HEK293 (cell line): ENCODE measurements at regions of chr15 and their contacts with region 1.

Region 1: DNA sequence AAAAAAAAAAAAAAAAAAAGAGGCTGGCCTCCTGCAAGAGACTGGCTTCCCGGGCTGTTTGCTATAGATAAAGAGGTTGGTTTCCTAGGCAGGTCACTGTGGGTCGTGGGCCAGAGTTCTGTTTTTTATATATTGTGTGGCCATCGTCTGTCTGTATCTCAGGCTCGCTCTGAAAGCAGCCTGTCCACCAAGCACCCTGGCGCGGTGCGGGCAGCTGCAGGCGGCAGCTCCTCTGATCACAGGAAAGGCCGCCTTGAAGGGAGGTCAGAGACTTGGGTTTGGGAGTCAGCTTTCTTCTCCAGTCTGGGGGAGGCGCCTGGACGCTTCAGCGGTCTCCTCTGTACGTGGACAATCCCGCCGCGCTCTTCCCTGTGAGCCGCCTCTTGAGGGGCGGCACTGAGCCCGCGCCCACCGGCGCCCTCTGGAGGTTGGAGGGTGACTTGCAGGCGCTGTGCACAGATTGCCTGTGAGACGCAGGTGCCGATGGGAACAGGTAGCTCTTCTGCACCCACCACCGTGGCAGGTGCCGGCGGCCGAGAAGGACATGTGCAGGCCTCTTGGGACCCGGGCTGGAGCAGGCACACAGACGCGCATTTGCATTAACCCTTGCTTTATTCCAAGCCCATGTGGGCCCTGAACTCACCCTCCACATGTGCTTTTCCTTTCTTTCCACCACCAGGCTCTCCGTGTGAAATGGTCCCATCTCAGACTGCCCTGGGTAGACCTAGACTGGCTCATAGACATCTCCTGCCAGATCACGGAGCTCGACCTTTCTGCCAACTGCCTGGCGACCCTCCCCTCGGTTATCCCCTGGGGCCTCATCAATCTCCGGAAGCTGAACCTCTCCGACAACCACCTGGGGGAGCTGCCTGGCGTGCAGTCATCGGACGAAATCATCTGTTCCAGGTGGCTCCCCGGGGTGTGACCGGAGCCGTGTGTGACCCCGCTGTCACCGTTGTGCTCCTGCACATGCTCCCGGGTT is 89.3 kb downstream of the LRRK1 start:
- H3K4me3 ChIP-seq: peak overlapping the region; percentile 57
- H3K27ac ChIP-seq: no peak overlapping the region; the same call in 1 of the 2 replicates
- H3K4me1 ChIP-seq: peaks cover 5% of the 10 kb centered on the region; the same call in 1 of the 2 replicates
- CTCF ChIP-seq: peak; percentile 97

Region 2: GRCh38 chr15:100349696-100350433 is 658.6 kb before region 1 on chr15:
- CTCF ChIA-PET with region 1: interaction called, 37 read pairs
- POLR2A ChIA-PET with region 1: interaction called, 3 read pairs
- H3K4me3 ChIP-seq: peak overlapping the region; percentile 63
- H3K27ac ChIP-seq: peak overlapping the region; percentile 84; the same call in 1 of the 2 replicates
- H3K4me1 ChIP-seq: no peaks in the 10 kb centered on the region
- CTCF ChIP-seq: peak; percentile 60

Region 3: DNA sequence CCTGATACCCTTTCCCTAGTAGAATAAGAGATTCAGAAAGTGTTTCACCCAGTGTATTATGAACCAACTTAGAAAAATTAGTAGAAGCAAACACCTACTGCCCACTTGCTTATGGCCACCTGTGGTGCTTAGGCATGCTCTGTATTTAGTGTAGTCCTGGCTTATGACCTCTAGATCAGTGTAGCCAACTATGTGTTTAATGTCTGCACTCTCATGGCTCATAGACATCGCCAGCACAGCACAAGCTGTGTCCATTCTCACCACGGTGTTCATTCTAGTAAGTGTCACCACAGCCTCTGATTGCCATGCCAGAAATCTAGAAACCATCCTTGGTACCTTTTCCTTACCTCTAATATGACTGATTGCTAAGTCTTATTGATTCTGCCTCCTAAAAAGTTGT is 391.7 kb before region 1 on chr15:
- CTCF ChIA-PET with region 1: interaction called, 10 read pairs
- POLR2A ChIA-PET with region 1: no interaction called
- H3K4me3 ChIP-seq: no peak overlapping the region
- H3K27ac ChIP-seq: no peak overlapping the region
- H3K4me1 ChIP-seq: no peaks in the 10 kb centered on the region
- CTCF ChIP-seq: no peak

Region 4: DNA sequence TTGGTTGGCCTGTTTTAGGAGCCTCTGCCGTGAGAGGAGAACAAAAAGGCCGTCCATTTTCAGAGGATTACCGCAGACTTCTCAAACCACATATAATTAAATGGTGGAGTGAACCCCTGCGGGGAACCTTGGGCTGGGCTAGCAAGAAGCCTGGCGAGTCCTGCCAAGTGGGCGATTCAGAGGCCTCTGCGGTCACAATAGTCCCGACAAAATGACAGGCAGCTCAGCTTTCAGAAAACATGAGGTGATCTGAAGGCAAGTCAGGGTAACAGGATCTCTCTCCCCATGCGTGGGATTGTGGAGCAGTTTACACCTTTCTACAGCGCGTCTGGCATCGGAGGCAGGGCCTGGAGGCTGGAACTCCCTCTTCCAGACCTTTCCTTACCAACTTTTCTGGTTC is 271.2 kb before region 1 on chr15:
- CTCF ChIA-PET with region 1: interaction called, 13 read pairs
- POLR2A ChIA-PET with region 1: no interaction called
- H3K4me3 ChIP-seq: no peak overlapping the region
- H3K27ac ChIP-seq: no peak overlapping the region
- H3K4me1 ChIP-seq: no peaks in the 10 kb centered on the region
- CTCF ChIP-seq: no peak

Region 5: GRCh38 chr15:100973351-100974111 is 34.9 kb before region 1 on chr15:
- CTCF ChIA-PET with region 1: interaction called, 12 read pairs
- POLR2A ChIA-PET with region 1: no interaction called
- H3K4me3 ChIP-seq: no peak overlapping the region
- H3K27ac ChIP-seq: no peak overlapping the region
- H3K4me1 ChIP-seq: no peaks in the 10 kb centered on the region
- CTCF ChIP-seq: no peak

Region 6: GRCh38 chr15:101047301-101047781 is 38.9 kb after region 1 on chr15:
- CTCF ChIA-PET with region 1: interaction called, 12 read pairs
- POLR2A ChIA-PET with region 1: no interaction called
- H3K4me3 ChIP-seq: no peak overlapping the region
- H3K27ac ChIP-seq: no peak overlapping the region
- H3K4me1 ChIP-seq: no peaks in the 10 kb centered on the region
- CTCF ChIP-seq: no peak

Region 7: GRCh38 chr15:101225658-101226057 is 217.2 kb after region 1 on chr15:
- CTCF ChIA-PET with region 1: no interaction called
- POLR2A ChIA-PET with region 1: no interaction called
- H3K4me3 ChIP-seq: no peak overlapping the region
- H3K27ac ChIP-seq: no peak overlapping the region
- H3K4me1 ChIP-seq: peaks cover 10% of the 10 kb centered on the region
- CTCF ChIP-seq: no peak

Region 8: DNA sequence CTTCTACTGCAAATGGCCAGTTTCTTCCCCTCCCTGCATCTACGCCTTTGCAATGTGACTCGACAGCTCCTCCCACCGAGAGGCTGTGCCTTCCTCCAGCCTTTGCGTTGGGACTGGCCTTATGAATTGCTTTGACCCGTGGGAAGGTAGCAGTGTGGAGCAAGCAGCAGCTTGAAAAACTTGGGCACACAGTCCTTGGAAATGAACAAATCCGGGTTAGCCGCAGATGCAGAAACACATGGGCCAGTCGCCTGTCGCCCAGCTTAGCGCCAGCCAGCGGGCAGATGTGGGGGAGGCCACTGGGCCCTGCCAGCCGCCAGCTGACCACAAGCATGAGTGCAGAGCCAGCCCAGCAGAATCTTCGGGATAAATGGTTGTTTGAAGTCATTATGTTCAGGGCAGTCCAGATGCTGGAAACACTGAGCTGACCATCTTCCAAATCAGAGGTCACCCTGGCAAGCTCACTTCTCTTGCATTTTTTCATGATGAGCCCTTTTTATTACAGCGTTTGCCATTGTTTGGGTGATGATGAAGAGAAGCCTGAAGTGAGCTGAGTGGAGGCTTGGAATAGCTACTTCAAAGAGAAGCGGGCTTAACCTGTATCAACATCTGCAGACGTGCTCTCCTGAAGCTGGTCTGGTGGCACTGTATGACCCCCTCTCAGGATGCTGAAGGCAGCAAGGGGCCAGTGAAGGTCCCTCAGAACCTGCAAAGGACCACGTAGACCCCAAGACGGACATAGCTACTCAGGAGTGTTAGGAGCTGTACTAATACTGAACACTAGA is 259.1 kb after region 1 on chr15:
- CTCF ChIA-PET with region 1: interaction called, 14 read pairs
- POLR2A ChIA-PET with region 1: interaction called, 3 read pairs
- H3K4me3 ChIP-seq: no peak overlapping the region
- H3K27ac ChIP-seq: no peak overlapping the region
- H3K4me1 ChIP-seq: no peaks in the 10 kb centered on the region
- CTCF ChIP-seq: no peak